ENCODE measurements at regions of chr1 and their contacts with region 1.

Region 1: DNA sequence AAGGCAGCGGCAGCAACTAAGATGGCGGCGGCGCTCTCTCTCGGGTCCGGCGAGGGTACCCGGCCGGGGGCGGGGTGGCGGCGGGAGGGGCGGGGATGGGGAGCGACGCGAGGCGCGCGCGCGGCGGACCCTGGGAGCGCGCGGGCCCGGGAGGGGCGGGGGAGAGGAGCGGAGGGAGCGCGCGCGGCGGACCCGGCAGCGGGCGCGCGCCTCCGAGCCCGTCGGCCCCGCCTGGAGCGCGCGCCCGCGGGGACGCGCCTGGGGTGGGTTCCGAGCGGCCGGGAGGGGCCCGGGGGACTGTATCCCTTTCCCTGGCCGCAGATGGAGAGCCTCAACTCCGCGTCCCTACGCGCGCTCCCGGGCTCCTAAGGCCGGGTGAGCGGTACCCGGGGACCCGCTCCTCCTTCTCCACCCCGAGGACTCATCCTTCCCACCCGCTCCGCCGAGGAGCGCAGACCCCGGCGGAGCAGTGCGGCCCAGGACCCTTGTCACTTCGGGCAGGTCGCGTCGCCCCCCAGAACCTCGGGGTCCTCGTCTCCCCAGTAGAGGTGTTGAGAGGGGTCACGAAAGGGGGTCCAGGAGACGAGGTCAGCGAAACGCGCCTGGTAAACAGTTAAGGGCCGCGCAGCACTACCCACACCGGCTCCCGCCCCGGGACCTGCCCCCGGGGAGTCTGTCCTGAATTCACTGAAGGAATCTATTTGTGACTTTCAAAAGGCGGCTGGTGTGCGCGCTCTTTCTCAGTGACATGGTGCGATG is at the start of gene CLSTN1:
- DNase-seq: peak; percentile 84
- H3K4me3 Mint-ChIP-seq: peak within 1 kb of the TSS; percentile 90
- H3K27ac Mint-ChIP-seq: peak within 1 kb of the TSS; percentile 73
- H3K4me1 Mint-ChIP-seq: peaks cover 31% of the 10 kb centered on the region
- H3K27me3 Mint-ChIP-seq: peaks cover 15% of the 10 kb centered on the region
- total RNA-seq, gene CLSTN1: 46.5 and 48.8 TPM in 2 replicates

Region 2: DNA sequence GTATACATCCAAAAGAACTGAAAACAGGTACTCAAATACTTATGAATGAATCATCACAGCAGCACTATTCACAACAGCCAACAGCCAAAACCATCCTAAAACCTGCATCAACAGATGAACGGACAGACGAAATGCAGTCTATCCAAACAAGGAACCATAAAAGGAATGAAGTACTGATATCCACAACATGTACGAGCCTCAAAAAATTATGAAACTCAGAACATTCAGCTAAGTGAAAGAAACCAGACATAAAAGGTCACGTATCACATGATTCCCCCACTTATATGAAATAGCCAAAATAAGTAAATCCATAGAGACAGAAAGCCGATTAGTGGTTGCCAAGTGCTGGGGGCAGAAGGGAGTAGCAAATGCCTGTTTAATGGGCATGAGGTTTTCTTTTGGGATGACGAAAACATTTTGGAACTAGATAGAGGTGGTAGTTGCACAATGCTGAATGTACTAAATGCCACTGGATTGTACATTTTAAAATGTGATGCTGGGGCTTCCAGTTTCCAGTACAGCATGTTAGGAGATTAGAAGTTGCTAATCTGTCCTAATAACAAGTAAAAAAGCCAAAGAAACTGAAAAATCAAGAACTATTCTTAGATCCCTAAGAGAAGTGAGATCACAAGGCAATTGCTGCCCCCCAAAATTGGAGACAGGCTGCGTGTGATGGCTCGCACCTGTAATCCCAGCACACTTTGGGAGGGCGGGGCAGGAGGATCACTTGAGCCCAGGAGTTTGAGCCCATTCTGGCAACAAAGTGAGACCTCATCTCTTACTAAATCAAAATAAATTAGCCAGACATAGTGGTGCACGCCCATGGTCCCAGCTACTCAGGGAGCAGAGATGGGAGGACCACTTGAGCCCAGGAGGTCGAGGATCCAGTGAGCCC is 25.6 kb before region 1 on chr1:
- intact Hi-C with region 1: loop called (anchors 2 kb)
- DNase-seq: no peak
- H3K4me3 Mint-ChIP-seq: no peak overlapping the region
- H3K27ac Mint-ChIP-seq: peak overlapping the region; percentile 27
- H3K4me1 Mint-ChIP-seq: peaks cover 40% of the 10 kb centered on the region
- H3K27me3 Mint-ChIP-seq: peaks cover 8% of the 10 kb centered on the region

Region 3: DNA sequence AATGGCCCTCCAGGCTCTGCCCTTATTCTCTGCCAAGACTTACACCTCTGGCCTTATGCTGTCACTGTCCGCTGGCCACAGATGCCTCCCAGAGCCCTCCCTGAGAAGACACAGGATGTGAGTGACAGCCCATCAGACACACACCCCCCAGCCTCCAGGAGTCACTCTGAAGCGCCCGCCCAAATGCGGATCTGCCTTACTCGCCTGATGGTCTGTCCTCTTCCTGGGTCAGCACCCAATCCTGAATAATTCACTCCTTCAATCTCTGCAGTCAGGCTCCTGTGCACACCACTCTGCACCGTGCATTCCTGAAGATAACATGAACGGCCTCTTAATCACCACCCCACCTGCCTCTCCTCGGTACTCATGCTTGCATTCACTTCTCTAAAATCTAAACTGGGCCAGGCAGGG is 15.0 kb before region 1 on chr1:
- intact Hi-C with region 1: no loop called
- DNase-seq: no peak
- H3K4me3 Mint-ChIP-seq: no peak overlapping the region
- H3K27ac Mint-ChIP-seq: no peak overlapping the region
- H3K4me1 Mint-ChIP-seq: peaks cover 7% of the 10 kb centered on the region
- H3K27me3 Mint-ChIP-seq: no peaks in the 10 kb centered on the region

Measured in activated T-helper 2 cell treated with anti-CD3 and anti-CD28 coated beads, Interferon-gamma antibody, Interleukin-2, Interleukin-4, amounts not matched to agents 10 μg/mL and 5 μg/mL and 100 μg/mL, durations not matched to agents 14 hours and 24 hours and 36 hours (primary cell).